Activated CD4-positive, alpha-beta memory T cell treated with anti-CD3 and anti-CD28 coated beads for 36 hours (primary cell): ENCODE measurements at regions of chr11 and their contacts with region 1.

Region 1: GRCh38 chr11:128956401-128957201 is 13.9 kb upstream of the TP53AIP1 start:
- DNase-seq: no peak
- H3K4me3 Mint-ChIP-seq: no peak overlapping the region
- H3K27ac Mint-ChIP-seq: no peak overlapping the region
- H3K4me1 Mint-ChIP-seq: peaks cover 2% of the 10 kb centered on the region
- H3K27me3 Mint-ChIP-seq: peaks cover 15% of the 10 kb centered on the region

Region 2: GRCh38 chr11:128879817-128880216 is 76.8 kb before region 1 on chr11:
- CTCF ChIA-PET with region 1: interaction called, 243 read pairs
- POLR2A ChIA-PET with region 1: no interaction called
- intact Hi-C with region 1: loop called (anchors 1 kb)
- DNase-seq: no peak
- H3K4me3 Mint-ChIP-seq: no peak overlapping the region
- H3K27ac Mint-ChIP-seq: no peak overlapping the region
- H3K4me1 Mint-ChIP-seq: no peaks in the 10 kb centered on the region
- H3K27me3 Mint-ChIP-seq: peaks cover 12% of the 10 kb centered on the region

Region 3: GRCh38 chr11:128905345-128906184 is 51.0 kb before region 1 on chr11:
- CTCF ChIA-PET with region 1: interaction called, 28 read pairs
- POLR2A ChIA-PET with region 1: interaction called, 3 read pairs
- intact Hi-C with region 1: no loop called
- DNase-seq: peak; percentile 61
- H3K4me3 Mint-ChIP-seq: peak overlapping the region; percentile 71
- H3K27ac Mint-ChIP-seq: no peak overlapping the region
- H3K4me1 Mint-ChIP-seq: peaks cover 15% of the 10 kb centered on the region
- H3K27me3 Mint-ChIP-seq: peaks cover 39% of the 10 kb centered on the region

Region 4: GRCh38 chr11:128928400-128928799 is 28.2 kb before region 1 on chr11:
- CTCF ChIA-PET with region 1: interaction called, 10 read pairs
- POLR2A ChIA-PET with region 1: no interaction called
- intact Hi-C with region 1: no loop called
- DNase-seq: peak; percentile 27
- H3K4me3 Mint-ChIP-seq: no peak overlapping the region
- H3K27ac Mint-ChIP-seq: no peak overlapping the region
- H3K4me1 Mint-ChIP-seq: peaks cover 10% of the 10 kb centered on the region
- H3K27me3 Mint-ChIP-seq: no peaks in the 10 kb centered on the region

Region 5: DNA sequence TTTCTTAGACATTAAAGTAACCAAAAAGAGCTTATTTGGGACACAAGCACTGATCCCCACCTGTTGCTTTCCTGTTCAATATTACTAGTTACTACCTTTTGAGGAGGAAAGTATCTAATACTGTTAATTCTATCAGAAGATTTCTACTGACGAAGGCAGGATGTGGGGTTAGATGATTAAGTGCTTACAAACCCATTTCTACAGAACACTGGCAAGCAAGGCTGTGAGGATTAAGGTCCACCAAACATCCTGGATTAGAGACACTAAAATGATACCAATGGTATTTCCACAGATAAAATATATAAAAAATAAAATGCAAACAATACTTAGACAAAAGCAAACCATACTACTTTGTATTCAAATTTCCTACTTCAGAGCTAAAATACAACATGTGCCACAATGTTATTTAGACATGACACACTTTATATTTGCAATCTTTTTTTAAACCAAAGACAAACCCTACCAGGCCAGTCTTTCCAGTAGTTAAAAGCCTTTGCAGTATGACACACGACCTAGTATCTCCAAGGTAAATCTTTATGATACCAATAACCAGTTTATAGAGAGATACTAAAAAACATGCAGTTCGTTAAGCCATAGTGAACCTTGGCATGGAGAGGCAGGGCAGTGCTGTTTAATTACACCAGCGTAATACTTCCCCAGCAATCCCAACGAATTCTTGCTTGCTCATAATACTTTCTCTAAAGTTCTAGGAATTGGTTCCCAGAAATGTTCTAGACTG is 57.3 kb after region 1 on chr11:
- CTCF ChIA-PET with region 1: no interaction called
- POLR2A ChIA-PET with region 1: no interaction called
- intact Hi-C with region 1: no loop called
- DNase-seq: no peak
- H3K4me3 Mint-ChIP-seq: no peak overlapping the region
- H3K27ac Mint-ChIP-seq: no peak overlapping the region
- H3K4me1 Mint-ChIP-seq: peaks cover 1% of the 10 kb centered on the region
- H3K27me3 Mint-ChIP-seq: peaks cover 2% of the 10 kb centered on the region